Caco-2 (cell line): ENCODE measurements at regions of chr15 and their contacts with region 1.

Region 1: DNA sequence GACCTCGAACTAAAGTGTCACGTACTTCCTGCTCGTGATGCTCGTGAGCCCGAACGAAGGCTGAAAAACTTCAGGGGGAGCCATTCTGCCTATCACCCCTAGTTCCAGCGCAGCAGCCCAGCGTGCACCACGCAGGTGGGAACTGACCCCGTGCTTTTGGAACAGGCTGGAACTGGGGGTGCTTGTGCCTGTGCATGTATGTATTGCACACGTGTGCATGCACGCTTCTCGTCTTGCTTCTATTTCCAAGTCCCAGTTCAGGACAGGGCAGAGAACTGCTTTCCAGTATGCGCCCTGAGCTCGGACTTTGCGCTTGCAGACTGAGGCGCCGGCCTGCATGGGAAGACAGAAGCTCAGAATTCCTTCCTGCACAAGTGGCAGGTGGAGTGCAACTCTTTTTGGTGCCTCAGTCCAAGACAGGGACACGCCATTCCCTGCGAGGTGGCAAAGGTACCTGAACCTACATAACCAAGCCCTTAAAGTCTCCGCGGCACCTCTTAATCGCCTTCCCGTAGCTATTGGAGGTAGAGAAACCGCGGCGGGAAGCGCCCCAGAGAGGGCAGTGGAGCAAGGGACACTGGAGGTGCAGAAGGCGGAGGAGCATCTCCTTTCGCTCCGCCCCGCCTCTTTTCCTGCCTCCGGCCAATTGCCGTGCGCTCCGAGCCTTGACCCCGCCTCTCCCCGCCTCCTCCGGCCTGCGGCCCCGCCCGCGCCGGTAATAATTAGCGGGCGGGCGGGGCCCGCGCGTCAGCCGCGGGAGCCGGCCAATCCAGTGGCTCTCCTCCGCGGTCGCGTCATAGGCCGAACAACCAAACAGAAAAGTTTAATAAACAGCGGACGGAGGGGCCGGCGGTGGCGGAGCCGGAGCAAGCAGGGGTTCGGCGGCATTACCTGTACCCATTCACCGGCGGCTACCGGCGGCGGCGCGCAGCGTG is at the start of gene ZFAND6:
- DNase-seq: peak; percentile 93 to 96
- H3K4me3 ChIP-seq: peak within 1 kb of the TSS; percentile 70
- H3K4me3 Mint-ChIP-seq: peak within 1 kb of the TSS; percentile 94
- H3K27ac Mint-ChIP-seq: peak within 1 kb of the TSS; percentile 81
- H3K4me1 ChIP-seq: peaks cover 16% of the 10 kb centered on the region; the same call in 1 of the 2 replicates
- H3K4me1 Mint-ChIP-seq: peaks cover 24% of the 10 kb centered on the region
- H3K27me3 ChIP-seq: no peaks in the 10 kb centered on the region
- H3K27me3 Mint-ChIP-seq: no peaks in the 10 kb centered on the region
- CTCF ChIP-seq: no peak
- total RNA-seq, gene ZFAND6: 40.5 and 44.7 TPM in 2 replicates

Region 2: GRCh38 chr15:79896637-79897379 is 162.3 kb before region 1 on chr15 and contains the start of gene MTHFS:
- CTCF ChIA-PET with region 1: no interaction called
- POLR2A ChIA-PET with region 1: no interaction called
- intact Hi-C with region 1: loop called (anchors 1 kb)
- DNase-seq: peak; percentile 85 to 89
- H3K4me3 ChIP-seq: peak within 1 kb of the TSS; percentile 87
- H3K4me3 Mint-ChIP-seq: peak within 1 kb of the TSS; percentile 85
- H3K27ac Mint-ChIP-seq: peak within 1 kb of the TSS; percentile 94
- H3K4me1 ChIP-seq: no peaks in the 10 kb centered on the region
- H3K4me1 Mint-ChIP-seq: peaks cover 12% of the 10 kb centered on the region
- H3K27me3 ChIP-seq: no peaks in the 10 kb centered on the region
- H3K27me3 Mint-ChIP-seq: no peaks in the 10 kb centered on the region
- CTCF ChIP-seq: peak in 1 of 2 experiments; percentile 59
- total RNA-seq, gene MTHFS: 45.1 and 48.2 TPM in 2 replicates

Region 3: DNA sequence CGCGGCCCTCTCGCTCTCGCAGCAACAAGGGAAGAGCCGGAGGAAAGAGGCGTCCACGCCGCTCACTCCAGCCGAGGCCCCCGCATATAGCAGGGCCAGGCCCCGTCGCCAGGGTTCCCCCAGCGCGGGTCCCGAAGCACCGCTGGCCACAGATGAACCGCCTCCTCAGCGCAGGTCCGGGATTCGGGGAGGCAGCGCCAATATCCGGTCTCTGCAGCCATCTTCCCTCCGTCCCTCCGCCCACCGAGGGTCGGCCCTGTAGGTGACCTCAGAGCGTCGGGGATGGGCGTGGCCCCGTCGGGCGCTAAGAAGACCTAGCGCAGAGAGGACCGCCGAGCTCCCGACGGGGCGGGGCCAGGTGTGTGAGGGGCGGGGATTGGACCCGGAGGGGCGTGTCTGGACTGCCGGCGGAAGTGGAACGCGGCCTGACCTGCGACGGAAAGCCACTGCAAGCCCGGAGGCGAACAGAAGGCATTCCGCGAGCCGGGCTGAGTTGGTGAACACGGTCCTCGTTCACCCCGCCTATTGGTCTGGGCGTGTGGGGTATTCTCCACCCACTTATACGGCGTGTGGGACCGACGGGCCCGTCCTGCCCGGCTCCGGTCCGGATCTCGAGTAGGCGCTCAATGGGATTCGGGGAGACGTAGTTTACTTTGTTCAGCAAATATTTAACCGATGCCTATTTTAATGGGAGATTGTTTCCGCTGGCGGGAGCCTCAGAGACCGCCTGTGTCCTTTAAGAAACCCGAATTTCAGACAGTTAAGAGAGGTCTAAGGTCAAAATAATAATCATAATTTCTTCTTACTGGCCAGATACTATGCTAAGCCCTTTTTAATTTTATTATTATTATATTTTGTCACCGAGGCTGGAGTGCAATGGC is 135.4 kb before region 1 on chr15:
- CTCF ChIA-PET with region 1: no interaction called
- POLR2A ChIA-PET with region 1: interaction called, 7 read pairs
- intact Hi-C with region 1: loop called (anchors 1 kb)
- DNase-seq: peak; percentile 97 to 99
- H3K4me3 ChIP-seq: peak overlapping the region; percentile 94
- H3K4me3 Mint-ChIP-seq: peak overlapping the region; percentile 83
- H3K27ac Mint-ChIP-seq: peak overlapping the region; percentile 91
- H3K4me1 ChIP-seq: 0 out of 2 replicates have a peak, but pooled peaks cover 6% of the 10 kb centered on the region
- H3K4me1 Mint-ChIP-seq: no peaks in the 10 kb centered on the region
- H3K27me3 ChIP-seq: no peaks in the 10 kb centered on the region
- H3K27me3 Mint-ChIP-seq: no peaks in the 10 kb centered on the region
- CTCF ChIP-seq: no peak

Region 4: GRCh38 chr15:79943820-79944219 is 115.3 kb before region 1 on chr15:
- CTCF ChIA-PET with region 1: no interaction called
- POLR2A ChIA-PET with region 1: no interaction called
- intact Hi-C with region 1: no loop called
- DNase-seq: no peak
- H3K4me3 ChIP-seq: no peak overlapping the region
- H3K4me3 Mint-ChIP-seq: no peak overlapping the region
- H3K27ac Mint-ChIP-seq: no peak overlapping the region
- H3K4me1 ChIP-seq: no peaks in the 10 kb centered on the region
- H3K4me1 Mint-ChIP-seq: no peaks in the 10 kb centered on the region
- H3K27me3 ChIP-seq: no peaks in the 10 kb centered on the region; the same call in 1 of the 2 replicates
- H3K27me3 Mint-ChIP-seq: peaks cover 6% of the 10 kb centered on the region
- CTCF ChIP-seq: no peak

Region 5: DNA sequence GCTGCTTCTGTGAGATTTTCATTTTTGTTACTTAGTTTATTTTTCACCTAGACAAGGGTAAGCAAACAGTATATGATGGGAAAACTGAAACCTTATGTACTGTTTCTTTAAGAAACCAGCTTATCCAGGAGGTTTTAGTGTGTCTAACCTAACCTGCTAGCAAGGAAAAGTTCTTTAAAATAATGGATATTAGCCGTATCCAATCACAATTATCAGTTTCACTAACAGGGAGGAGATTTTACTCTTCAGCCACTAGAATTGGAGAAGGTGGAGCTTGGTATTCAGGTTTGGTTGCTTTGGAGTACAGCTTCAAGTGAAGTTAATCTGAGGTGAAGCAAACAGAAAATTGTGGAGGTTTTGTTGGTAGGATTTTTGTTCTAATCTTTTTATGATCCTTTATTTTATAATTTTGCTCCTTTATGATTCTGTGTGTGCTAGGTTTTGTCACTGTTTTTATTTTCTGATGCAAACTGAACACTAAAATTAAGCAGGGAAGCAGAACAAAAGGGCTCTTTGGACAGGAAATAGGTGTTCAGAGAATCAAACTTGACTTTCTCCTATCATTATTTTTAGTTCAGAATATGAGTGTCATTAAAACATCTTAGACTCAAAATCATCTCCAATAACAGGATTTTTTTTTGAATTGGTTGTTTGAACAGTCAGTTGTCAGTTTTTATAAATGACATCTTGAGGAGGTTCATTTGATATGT is 13.3 kb after region 1 on chr15:
- CTCF ChIA-PET with region 1: interaction called, 4 read pairs
- POLR2A ChIA-PET with region 1: interaction called, 14 read pairs
- intact Hi-C with region 1: no loop called
- DNase-seq: peak; percentile 39 to 75
- H3K4me3 ChIP-seq: peak overlapping the region; percentile 34
- H3K4me3 Mint-ChIP-seq: peak overlapping the region; percentile 75
- H3K27ac Mint-ChIP-seq: no peak overlapping the region
- H3K4me1 ChIP-seq: no peaks in the 10 kb centered on the region; the same call in 1 of the 2 replicates
- H3K4me1 Mint-ChIP-seq: peaks cover 20% of the 10 kb centered on the region
- H3K27me3 ChIP-seq: no peaks in the 10 kb centered on the region
- H3K27me3 Mint-ChIP-seq: no peaks in the 10 kb centered on the region
- CTCF ChIP-seq: no peak

Region 6: DNA sequence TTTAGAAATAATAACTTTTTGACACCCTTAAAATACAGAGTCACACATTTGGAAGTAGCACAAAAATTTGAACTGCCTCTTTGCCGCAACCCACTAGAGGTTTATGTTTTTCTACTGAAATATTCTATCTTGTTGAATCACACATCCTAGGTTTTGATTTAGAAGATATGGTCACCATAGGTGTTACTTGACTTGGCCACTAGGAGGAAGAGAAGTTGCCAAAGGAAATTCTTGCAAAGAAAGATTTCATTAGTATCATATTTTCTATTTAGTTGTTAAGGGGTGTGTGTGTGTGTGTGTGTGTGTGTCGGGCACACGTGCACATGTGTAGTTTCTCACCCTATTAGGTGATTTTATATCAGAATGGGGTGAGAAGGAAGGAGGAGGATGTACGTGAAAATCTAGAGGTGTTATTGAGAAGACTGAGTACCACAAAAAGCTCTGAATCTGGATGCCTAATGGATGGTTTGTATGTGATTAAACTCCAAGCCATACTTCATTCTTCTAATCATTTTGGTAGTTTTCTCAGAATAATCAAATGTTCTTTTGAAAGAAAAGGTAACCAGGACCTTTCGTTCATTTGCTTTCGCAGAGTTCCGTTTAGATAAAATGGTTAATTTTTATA is 31.9 kb after region 1 on chr15:
- CTCF ChIA-PET with region 1: no interaction called
- POLR2A ChIA-PET with region 1: no interaction called
- intact Hi-C with region 1: loop called (anchors 1 kb)
- DNase-seq: no peak
- H3K4me3 ChIP-seq: no peak overlapping the region
- H3K4me3 Mint-ChIP-seq: no peak overlapping the region
- H3K27ac Mint-ChIP-seq: no peak overlapping the region
- H3K4me1 ChIP-seq: no peaks in the 10 kb centered on the region
- H3K4me1 Mint-ChIP-seq: no peaks in the 10 kb centered on the region
- H3K27me3 ChIP-seq: no peaks in the 10 kb centered on the region
- H3K27me3 Mint-ChIP-seq: no peaks in the 10 kb centered on the region
- CTCF ChIP-seq: peak; percentile 32 to 36

Region 7: DNA sequence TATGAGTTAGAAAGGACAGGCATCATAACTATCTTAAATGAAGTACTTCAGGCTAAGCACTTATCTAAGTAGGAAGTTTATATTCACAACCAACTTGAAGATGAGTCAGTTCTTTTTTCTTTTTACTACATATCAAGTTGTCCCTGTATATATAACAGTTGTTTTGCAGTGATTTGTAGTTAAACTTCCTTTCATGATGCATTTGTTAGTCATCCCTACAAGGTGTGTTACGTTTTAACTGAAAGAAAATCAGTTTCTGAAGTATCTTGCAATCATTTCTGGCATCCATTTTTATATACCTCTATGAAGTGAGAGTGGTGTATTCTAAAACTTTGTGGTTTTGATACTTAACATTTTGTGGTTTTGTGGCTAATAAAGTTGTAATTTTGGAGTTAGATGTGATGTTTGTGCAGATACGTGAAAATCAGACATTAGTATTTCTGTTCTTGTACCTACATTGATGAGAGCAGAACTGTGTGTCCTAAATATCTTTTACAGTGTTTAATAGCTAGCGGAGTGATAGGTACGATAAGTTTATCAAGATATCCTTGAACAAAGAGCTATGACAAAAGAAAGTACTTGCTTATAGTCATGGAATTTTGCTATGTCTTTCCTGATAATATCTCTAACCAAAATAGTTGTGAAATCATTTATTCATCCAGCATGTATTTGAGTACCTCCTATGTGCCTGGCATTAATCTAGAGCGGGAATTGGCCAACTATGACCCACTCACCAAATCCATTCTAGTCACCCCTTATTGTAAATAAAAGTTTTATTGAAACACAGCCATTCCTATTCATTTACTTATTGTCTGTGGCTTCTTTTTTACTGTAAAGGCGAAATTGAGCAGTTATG is 46.7 kb after region 1 on chr15:
- CTCF ChIA-PET with region 1: no interaction called
- POLR2A ChIA-PET with region 1: no interaction called
- intact Hi-C with region 1: no loop called
- DNase-seq: no peak
- H3K4me3 ChIP-seq: no peak overlapping the region
- H3K4me3 Mint-ChIP-seq: no peak overlapping the region
- H3K27ac Mint-ChIP-seq: no peak overlapping the region
- H3K4me1 ChIP-seq: no peaks in the 10 kb centered on the region
- H3K4me1 Mint-ChIP-seq: no peaks in the 10 kb centered on the region
- H3K27me3 ChIP-seq: no peaks in the 10 kb centered on the region
- H3K27me3 Mint-ChIP-seq: no peaks in the 10 kb centered on the region
- CTCF ChIP-seq: no peak

Region 8: GRCh38 chr15:80152180-80152845 is 93.2 kb after region 1 on chr15:
- CTCF ChIA-PET with region 1: no interaction called
- POLR2A ChIA-PET with region 1: no interaction called
- intact Hi-C with region 1: loop called (anchors 1 kb)
- DNase-seq: peak; percentile 90 to 98
- H3K4me3 ChIP-seq: peak overlapping the region; percentile 87
- H3K4me3 Mint-ChIP-seq: peak overlapping the region; percentile 84
- H3K27ac Mint-ChIP-seq: no peak overlapping the region
- H3K4me1 ChIP-seq: peaks cover 9% of the 10 kb centered on the region; the same call in 1 of the 2 replicates
- H3K4me1 Mint-ChIP-seq: peaks cover 7% of the 10 kb centered on the region
- H3K27me3 ChIP-seq: no peaks in the 10 kb centered on the region
- H3K27me3 Mint-ChIP-seq: peaks cover 3% of the 10 kb centered on the region
- CTCF ChIP-seq: no peak

Region 9: GRCh38 chr15:80173022-80173759 is 114.1 kb after region 1 on chr15:
- CTCF ChIA-PET with region 1: interaction called, 4 read pairs
- POLR2A ChIA-PET with region 1: no interaction called
- intact Hi-C with region 1: loop called (anchors 2 kb)
- DNase-seq: peak; percentile 75 to 81
- H3K4me3 ChIP-seq: no peak overlapping the region
- H3K4me3 Mint-ChIP-seq: no peak overlapping the region
- H3K27ac Mint-ChIP-seq: no peak overlapping the region
- H3K4me1 ChIP-seq: no peaks in the 10 kb centered on the region
- H3K4me1 Mint-ChIP-seq: no peaks in the 10 kb centered on the region
- H3K27me3 ChIP-seq: no peaks in the 10 kb centered on the region
- H3K27me3 Mint-ChIP-seq: no peaks in the 10 kb centered on the region
- CTCF ChIP-seq: peak; percentile 78 to 92